ENCODE measurements at regions of chr10 and their contacts with region 1.

Region 1: DNA sequence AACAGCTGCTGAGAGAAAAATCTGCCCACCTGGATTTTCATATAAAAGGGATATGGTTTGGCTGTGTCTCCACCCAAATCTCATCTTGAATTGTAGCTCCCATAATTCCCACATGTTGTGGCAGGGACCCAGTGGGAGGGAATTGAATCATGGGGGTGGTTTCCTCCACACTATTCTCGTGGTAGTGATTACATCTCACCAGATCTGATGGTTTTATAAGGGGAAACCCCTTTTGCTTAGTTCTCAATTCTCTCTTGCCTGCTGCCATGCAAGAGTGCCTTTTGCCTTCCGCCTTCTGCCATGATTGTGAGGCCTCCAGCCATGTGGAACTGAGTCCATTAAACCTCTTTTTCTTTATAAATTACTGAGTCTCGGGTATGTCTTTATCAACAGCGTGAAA is 20.8 kb upstream of the MKI67 start:
- ATAC-seq: no peak
- H3K4me3 ChIP-seq: no peak overlapping the region
- H3K27ac ChIP-seq: no peak overlapping the region
- H3K4me1 ChIP-seq: no peaks in the 10 kb centered on the region

Region 2: GRCh38 chr10:127738512-127739424 is 408.3 kb before region 1 on chr10:
- in situ Hi-C with region 1: no loop called
- ATAC-seq: no peak
- H3K4me3 ChIP-seq: no peak overlapping the region
- H3K27ac ChIP-seq: no peak overlapping the region
- H3K4me1 ChIP-seq: peaks cover 0 to 2% of the 10 kb centered on the region in 2 donors

Region 3: DNA sequence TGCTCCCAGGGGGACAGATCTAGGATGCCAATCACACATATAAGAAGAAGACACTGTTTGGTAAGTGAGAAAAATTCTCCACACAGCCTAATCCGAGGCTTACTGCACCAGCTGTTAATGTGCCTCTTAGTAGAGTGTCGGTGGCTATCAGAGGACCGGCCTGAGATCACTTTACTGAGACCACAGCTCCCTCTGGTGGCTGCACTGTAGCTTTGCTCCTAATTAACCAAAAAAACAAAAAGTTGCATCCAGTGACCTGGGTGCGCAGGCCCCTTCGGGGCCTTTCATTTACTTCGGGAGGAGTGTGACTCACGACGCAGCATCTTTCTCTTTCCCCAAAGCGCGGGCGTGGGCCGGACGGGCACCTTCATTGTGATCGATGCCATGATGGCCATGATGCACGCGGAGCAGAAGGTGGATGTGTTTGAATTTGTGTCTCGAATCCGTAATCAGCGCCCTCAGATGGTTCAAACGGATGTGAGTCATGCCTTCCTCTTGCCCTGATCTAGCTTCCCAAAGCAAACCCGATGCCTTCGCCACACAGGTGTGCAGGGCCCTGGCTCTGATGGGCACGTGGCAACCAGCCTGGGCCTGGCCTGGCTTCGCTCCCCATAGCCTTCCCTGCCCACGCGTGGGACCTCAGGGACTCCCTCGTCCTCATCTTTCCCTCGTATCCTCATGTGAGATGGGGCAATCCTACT is 77.6 kb before region 1 on chr10:
- in situ Hi-C with region 1: loop called in 1 of 9 experiments (anchors 10 kb)
- ATAC-seq: peak; percentile 42 to 90 (median 80)
- H3K4me3 ChIP-seq: no peak overlapping the region
- H3K27ac ChIP-seq: no peak overlapping the region
- H3K4me1 ChIP-seq: no peaks in the 10 kb centered on the region